ENCODE measurements at regions of chr6 and their contacts with region 1.

Region 1: DNA sequence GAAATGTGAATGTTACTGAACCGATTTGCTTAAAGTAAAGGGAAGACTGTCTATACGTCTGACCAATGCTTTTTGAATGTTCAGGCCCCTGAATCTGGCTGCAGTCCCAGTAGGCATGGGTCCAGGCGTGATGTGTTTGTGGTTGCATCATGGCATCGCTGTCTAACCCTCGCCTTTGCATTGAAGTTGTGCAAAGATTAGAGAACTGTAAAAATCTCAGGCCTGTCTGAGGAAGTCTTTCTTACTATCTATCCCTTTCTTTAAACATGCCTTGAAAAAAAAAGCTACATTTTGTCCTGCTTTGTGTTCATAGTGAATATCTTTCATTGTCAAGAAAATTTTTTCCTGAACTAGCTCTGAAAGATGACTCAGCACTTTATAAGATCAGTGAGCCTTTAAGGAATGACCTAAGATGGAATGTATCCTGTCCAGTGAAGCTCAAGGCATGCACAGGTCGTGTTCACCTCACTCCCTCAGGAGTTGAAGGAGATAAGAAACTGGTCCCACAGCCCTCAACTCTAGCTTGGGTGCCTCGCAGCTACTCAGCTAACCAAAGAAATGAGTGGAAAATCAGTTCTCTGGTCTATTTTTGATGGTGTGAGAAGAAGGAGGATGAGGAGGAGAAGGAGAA is 48.5 kb downstream of the TPD52L1 start:
- DNase-seq: peak; percentile 35 to 89
- ATAC-seq: peak; percentile 63 to 74
- H3K4me3 ChIP-seq: peak overlapping the region; percentile 14; the same call in 1 of the 3 replicates
- H3K27ac ChIP-seq: peak overlapping the region; percentile 95 to 97
- H3K4me1 ChIP-seq: peaks cover 66% of the 10 kb centered on the region
- CTCF ChIP-seq: no peak
- EP300 ChIP-seq: peak; percentile 54 to 56; a peak in 3 of 5 replicates
- POLR2A ChIP-seq: no peak
- RAD21 ChIP-seq: no peak

Region 2: GRCh38 chr6:125140808-125141207 is 61.3 kb before region 1 on chr6:
- CTCF ChIA-PET with region 1: no interaction called
- POLR2A ChIA-PET with region 1: no interaction called
- DNase-seq: no peak
- ATAC-seq: no peak
- H3K4me3 ChIP-seq: no peak overlapping the region
- H3K27ac ChIP-seq: no peak overlapping the region
- H3K4me1 ChIP-seq: no peaks in the 10 kb centered on the region
- CTCF ChIP-seq: no peak
- EP300 ChIP-seq: no peak
- POLR2A ChIP-seq: no peak
- RAD21 ChIP-seq: no peak

Region 3: DNA sequence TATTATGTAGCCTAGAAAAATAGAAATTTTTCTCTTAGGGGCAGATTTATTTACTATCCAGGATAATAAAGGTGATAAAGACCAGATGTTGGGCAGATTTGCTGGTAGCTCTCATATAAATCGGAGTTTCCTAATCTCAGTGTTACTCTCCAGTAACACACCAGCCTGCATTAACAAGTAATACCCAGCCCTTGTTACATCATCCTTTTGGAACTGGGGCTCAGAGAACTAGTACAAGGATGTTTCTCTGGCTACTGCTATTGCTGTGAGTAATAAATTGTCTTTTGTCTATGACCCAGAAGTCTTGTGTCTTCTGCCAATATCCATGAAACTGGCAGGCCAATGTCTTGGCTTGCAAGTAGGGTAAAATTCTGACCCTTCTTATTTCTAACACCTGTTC is 31.7 kb before region 1 on chr6:
- CTCF ChIA-PET with region 1: no interaction called
- POLR2A ChIA-PET with region 1: no interaction called
- DNase-seq: no peak
- ATAC-seq: no peak
- H3K4me3 ChIP-seq: no peak overlapping the region
- H3K27ac ChIP-seq: peak overlapping the region; percentile 54 to 65; a peak in 5 of 6 replicates
- H3K4me1 ChIP-seq: peaks cover 40% of the 10 kb centered on the region
- CTCF ChIP-seq: no peak
- EP300 ChIP-seq: no peak
- POLR2A ChIP-seq: no peak
- RAD21 ChIP-seq: no peak

Region 4: DNA sequence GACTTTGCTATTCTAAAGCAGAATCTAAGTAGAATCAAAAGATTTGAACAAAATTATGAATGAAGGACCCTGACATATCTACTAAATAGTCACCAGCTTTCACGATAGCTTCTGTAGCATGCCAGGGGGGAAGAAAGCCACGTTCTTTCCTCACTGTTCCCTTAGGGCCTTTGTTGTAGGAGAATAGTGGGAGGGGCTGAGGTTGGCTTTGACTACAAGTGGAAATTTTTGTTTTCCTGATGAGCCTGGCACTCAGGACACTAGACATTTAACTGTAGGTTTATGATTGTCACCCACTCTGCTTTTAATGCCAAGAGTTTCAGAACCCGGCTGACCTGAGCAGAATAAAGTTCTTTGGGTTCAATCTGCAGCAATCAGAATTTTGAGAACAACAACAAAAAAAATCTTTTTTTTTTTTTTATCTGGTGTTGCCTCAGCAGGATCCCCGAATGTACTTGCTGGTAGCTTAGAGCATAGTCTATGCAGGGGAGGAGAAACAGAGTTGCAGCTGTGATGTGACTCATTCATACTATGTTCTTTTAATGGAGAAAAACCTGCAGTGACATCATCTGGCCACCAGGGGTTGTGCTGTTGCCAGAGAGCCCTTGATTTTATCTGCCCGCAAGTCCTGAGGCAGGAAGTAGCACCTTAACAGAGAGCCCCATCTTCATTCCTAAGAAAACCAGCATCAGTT is 10.0 kb before region 1 on chr6:
- CTCF ChIA-PET with region 1: interaction called, 11 read pairs
- POLR2A ChIA-PET with region 1: interaction called, 3 read pairs
- DNase-seq: peak; percentile 47 to 81
- ATAC-seq: peak; percentile 88 to 92
- H3K4me3 ChIP-seq: no peak overlapping the region
- H3K27ac ChIP-seq: peak overlapping the region; percentile 28 to 81; a peak in 5 of 6 replicates
- H3K4me1 ChIP-seq: peaks cover 84% of the 10 kb centered on the region
- CTCF ChIP-seq: peak; percentile 47
- EP300 ChIP-seq: no peak
- POLR2A ChIP-seq: no peak
- RAD21 ChIP-seq: peak; percentile 55 to 65; a peak in 4 of 5 replicates

Measured in A549 (cell line).